Naive thymus-derived CD4-positive, alpha-beta T cell (primary cell): ENCODE measurements at regions of chr1 and their contacts with region 1.

Region 1: GRCh38 chr1:52365746-52366516 is at the start of gene CC2D1B:
- DNase-seq: peak; percentile 97 to 100 (median 99)
- ATAC-seq: peak; percentile 90
- H3K4me3 ChIP-seq: peak within 1 kb of the TSS; percentile 67
- H3K4me3 Mint-ChIP-seq: peak within 1 kb of the TSS; percentile 85 to 98 (median 94)
- H3K27ac ChIP-seq: peak within 1 kb of the TSS; percentile 95
- H3K27ac Mint-ChIP-seq: peak within 1 kb of the TSS; percentile 89 to 97 (median 94)
- H3K4me1 ChIP-seq: peaks cover 15 to 20% of the 10 kb centered on the region in 2 donors
- H3K4me1 Mint-ChIP-seq: peaks cover 26 to 65% (median 51%) of the 10 kb centered on the region in 7 donors
- H3K27me3 ChIP-seq: no peaks in the 10 kb centered on the region
- H3K27me3 Mint-ChIP-seq: no peaks in the 10 kb centered on the region
- total RNA-seq, gene CC2D1B: 44.5 to 91.2 (median 58.3) TPM

Region 2: GRCh38 chr1:51519048-51519864 is 846.7 kb before region 1 on chr1 and contains the start of gene EPS15:
- CTCF ChIA-PET with region 1: no interaction called
- POLR2A ChIA-PET with region 1: no interaction called
- intact Hi-C with region 1: loop called in 1 of 2 experiments (anchors 2 kb)
- DNase-seq: peak; percentile 62 to 90 (median 77)
- ATAC-seq: peak; percentile 86
- H3K4me3 ChIP-seq: peak within 1 kb of the TSS; percentile 87
- H3K4me3 Mint-ChIP-seq: peak within 1 kb of the TSS; percentile 89 to 97 (median 94)
- H3K27ac ChIP-seq: peak within 1 kb of the TSS; percentile 66
- H3K27ac Mint-ChIP-seq: peak within 1 kb of the TSS; percentile 86 to 95 (median 90)
- H3K4me1 ChIP-seq: peaks cover 31 to 34% of the 10 kb centered on the region in 2 donors
- H3K4me1 Mint-ChIP-seq: peaks cover 46 to 58% (median 55%) of the 10 kb centered on the region in 7 donors
- H3K27me3 ChIP-seq: no peaks in the 10 kb centered on the region
- H3K27me3 Mint-ChIP-seq: no peaks in the 10 kb centered on the region
- total RNA-seq, gene EPS15: 44.8 to 79.9 (median 53.5) TPM

Region 3: DNA sequence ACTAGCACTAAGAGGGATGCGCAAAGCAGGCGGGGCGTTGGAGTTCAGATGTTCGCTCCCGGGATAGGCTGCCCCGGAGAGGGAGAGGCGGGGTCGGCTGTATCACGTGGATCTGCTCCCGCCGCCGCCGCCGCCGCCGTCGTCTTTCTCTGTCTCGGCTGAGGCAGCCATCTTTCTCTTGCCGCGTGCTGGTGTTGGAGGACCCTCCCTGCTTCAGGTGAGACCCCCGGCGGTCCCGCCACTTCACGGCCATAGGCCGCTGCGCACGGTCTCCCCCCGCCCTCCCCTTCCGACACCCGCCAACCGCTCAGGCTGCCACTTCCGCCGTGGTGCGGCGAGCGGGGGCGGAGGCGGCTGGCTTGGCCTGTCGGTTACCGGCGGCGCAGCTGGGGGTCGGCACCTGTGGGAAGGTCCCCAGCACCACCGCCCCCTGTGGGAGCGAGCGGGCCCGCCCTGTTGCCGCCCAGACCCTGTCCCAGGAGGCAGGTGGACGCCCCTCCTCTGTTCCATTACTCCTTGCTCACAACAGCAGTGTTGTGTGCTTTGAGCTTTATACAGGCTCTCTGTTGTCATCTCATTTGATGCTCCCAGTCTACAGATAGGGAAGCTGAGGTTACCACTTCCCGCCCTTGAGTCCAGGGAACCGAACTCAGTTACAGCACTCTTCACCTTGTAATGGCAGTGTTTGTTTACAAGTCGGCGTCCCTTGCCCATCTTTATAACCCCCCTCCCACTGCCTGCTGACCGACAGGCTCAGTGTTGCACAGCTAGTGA is 309.6 kb before region 1 on chr1 and contains the start of gene BTF3L4:
- CTCF ChIA-PET with region 1: no interaction called
- POLR2A ChIA-PET with region 1: no interaction called
- intact Hi-C with region 1: loop called in 1 of 2 experiments (anchors 2 kb)
- DNase-seq: peak; percentile 74 to 94 (median 90)
- ATAC-seq: peak; percentile 97
- H3K4me3 ChIP-seq: peak within 1 kb of the TSS; percentile 92
- H3K4me3 Mint-ChIP-seq: peak within 1 kb of the TSS; percentile 93 to 100 (median 98)
- H3K27ac ChIP-seq: peak within 1 kb of the TSS; percentile 87
- H3K27ac Mint-ChIP-seq: peak within 1 kb of the TSS; percentile 91 to 99 (median 96)
- H3K4me1 ChIP-seq: peaks cover 19 to 24% of the 10 kb centered on the region in 2 donors
- H3K4me1 Mint-ChIP-seq: peaks cover 39 to 79% (median 65%) of the 10 kb centered on the region in 7 donors
- H3K27me3 ChIP-seq: no peaks in the 10 kb centered on the region
- H3K27me3 Mint-ChIP-seq: no peaks in the 10 kb centered on the region
- total RNA-seq, gene BTF3L4: 30.4 to 41.2 (median 35.8) TPM

Region 4: DNA sequence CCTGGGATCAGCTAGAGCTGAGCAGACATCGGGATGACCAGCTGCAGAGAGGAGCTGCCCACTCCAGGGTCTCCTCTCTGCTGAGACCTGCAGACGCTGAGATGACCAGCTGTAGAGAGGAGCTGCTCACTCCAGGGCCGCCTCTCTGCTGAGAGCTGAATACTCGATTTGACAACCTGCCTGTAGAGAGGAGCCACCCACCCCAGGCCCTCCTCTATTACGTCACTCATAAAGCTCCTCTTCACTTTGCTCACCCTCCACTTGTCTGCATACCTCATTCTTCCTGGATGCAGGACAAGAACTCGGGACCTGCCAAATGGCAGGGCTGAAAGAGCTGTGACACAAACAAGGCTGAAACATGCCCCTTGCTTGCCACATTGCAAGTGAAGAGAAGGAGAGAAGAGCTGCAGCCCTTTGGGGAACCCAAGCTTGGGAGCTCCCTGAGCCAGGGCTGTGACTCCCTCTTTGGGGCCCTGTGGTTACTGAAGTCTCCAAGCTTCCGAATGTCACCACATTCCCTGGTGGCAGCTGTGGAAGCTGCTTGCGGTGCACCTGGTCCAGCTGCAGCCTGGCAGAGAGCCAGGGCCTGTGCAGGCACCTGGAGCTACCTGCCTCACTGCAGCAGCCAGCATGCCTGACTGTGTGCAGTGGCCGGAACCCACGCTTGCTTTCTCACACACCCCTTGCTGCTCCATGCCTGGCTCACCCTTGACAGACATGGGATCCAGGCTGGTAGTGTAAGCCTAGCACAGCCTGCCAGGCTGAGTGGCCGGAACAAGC is 59.5 kb before region 1 on chr1:
- CTCF ChIA-PET with region 1: no interaction called
- POLR2A ChIA-PET with region 1: no interaction called
- intact Hi-C with region 1: no loop called
- DNase-seq: no peak
- ATAC-seq: no peak
- H3K4me3 ChIP-seq: no peak overlapping the region
- H3K4me3 Mint-ChIP-seq: no peak overlapping the region
- H3K27ac ChIP-seq: no peak overlapping the region
- H3K27ac Mint-ChIP-seq: no peak overlapping the region
- H3K4me1 ChIP-seq: no peaks in the 10 kb centered on the region
- H3K4me1 Mint-ChIP-seq: no peaks in the 10 kb centered on the region
- H3K27me3 ChIP-seq: no peaks in the 10 kb centered on the region
- H3K27me3 Mint-ChIP-seq: no peaks in the 10 kb centered on the region

Region 5: DNA sequence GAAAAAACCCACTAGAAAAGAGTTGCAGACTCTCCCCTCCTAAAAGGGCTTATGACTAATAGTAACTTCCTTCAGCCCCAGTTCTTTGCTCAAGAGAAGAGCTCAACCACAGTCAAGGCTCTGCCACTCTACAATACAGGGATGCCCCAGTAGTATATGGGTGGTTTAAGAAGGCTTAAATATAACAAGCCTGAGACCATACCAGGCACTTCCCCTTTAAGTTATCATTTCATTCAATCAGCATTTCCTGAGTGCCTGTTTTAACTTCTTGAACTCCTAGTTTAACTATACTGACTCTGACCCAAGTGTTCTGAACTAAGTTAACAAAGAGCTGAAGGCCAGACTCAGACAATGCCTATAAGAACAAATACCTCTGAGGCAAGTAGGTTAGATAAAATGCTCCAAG is 58.3 kb after region 1 on chr1:
- CTCF ChIA-PET with region 1: no interaction called
- POLR2A ChIA-PET with region 1: interaction called, 5 read pairs
- intact Hi-C with region 1: loop called in 1 of 2 experiments (anchors 1 kb)
- DNase-seq: peak in 7 of 9 donors; percentile 38 to 71 (median 57)
- ATAC-seq: peak; percentile 93
- H3K4me3 ChIP-seq: peak overlapping the region; percentile 14
- H3K4me3 Mint-ChIP-seq: peak overlapping the region; percentile 49 to 81 (median 74)
- H3K27ac ChIP-seq: peak overlapping the region; percentile 63
- H3K27ac Mint-ChIP-seq: peak overlapping the region; percentile 85 to 96 (median 91)
- H3K4me1 ChIP-seq: peaks cover 35 to 45% of the 10 kb centered on the region in 2 donors
- H3K4me1 Mint-ChIP-seq: peaks cover 33 to 72% (median 51%) of the 10 kb centered on the region in 7 donors
- H3K27me3 ChIP-seq: no peaks in the 10 kb centered on the region
- H3K27me3 Mint-ChIP-seq: no peaks in the 10 kb centered on the region

Region 6: DNA sequence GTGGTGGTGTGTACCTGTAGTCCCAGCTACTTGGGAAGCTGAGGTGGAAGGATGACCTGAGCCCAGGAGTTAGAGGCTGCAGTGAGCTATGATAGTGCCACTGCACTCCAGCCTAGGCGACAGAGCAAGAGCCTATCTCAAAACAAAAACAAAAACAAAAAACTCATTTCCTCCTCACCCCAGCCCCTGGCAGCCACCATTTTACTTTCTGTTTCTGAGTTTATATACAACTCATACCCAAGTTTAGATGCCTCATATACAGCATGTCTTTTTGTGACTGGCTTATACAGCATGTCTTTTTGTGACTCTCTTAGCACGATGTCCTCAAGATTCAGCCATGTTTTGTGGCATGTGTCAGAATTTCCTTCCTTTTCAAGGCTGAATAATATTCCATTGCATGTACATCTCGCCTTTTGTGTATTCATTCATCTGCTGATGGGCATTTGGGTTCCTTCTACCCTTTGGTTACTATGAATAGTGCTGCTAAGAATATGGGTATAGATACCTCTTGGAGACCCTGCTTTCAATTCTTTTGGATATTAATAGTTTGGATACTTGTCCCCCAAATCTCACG is 317.5 kb after region 1 on chr1:
- CTCF ChIA-PET with region 1: no interaction called
- POLR2A ChIA-PET with region 1: no interaction called
- intact Hi-C with region 1: loop called (anchors 1 kb)
- DNase-seq: no peak
- ATAC-seq: no peak
- H3K4me3 ChIP-seq: no peak overlapping the region
- H3K4me3 Mint-ChIP-seq: no peak overlapping the region
- H3K27ac ChIP-seq: no peak overlapping the region
- H3K27ac Mint-ChIP-seq: peak overlapping the region in 6 of 9 donors; percentile 8 to 68 (median 26)
- H3K4me1 ChIP-seq: peaks cover 4 to 6% of the 10 kb centered on the region in 2 donors
- H3K4me1 Mint-ChIP-seq: peaks cover 6 to 28% (median 13%) of the 10 kb centered on the region in 7 donors
- H3K27me3 ChIP-seq: no peaks in the 10 kb centered on the region
- H3K27me3 Mint-ChIP-seq: no peaks in the 10 kb centered on the region

Region 7: DNA sequence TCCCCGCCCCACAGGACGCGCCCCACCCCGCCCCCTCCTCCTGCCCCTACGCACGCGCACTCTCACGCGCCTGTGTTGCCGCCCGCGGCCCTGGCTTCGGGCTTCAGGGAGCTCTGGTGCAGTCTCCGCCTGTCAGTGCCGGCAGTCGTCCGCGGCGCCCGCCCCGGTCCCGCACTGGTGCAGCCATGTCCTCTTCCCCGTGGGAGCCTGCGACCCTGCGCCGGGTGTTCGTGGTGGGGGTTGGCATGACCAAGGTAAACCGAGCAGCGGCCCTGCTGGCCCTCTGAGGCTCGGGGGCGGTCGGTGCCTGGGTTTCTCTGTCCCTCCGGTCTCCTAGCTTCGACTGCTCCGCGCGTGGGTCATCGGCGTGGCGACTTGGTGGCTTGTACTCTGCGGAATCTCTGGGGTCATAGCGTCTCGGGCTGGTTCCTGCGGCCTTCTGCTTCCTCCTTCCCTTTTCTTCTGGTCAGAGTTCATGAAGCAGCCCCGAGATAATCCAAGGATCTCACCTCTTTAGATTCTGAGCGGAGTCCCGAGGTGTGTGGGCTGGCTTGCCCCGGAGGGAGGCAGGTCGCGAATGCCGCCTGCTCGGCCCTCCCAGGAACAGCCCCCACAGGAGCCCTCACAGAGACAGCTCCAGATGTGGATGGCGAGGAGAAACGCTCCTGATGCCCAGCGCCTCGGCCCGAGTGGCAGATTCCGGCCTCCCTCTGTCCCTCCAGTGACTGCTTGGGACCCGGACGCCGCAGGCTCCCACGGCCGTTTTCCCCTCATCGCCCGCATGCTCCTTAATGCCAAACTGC is 561.5 kb after region 1 on chr1 and contains the start of gene SCP2:
- CTCF ChIA-PET with region 1: no interaction called
- POLR2A ChIA-PET with region 1: no interaction called
- intact Hi-C with region 1: loop called (anchors 10 kb)
- DNase-seq: peak; percentile 64 to 83 (median 75)
- ATAC-seq: peak; percentile 96
- H3K4me3 ChIP-seq: peak within 1 kb of the TSS; percentile 87
- H3K4me3 Mint-ChIP-seq: peak within 1 kb of the TSS; percentile 82 to 96 (median 88)
- H3K27ac ChIP-seq: peak within 1 kb of the TSS; percentile 77
- H3K27ac Mint-ChIP-seq: peak within 1 kb of the TSS; percentile 33 to 93 (median 75)
- H3K4me1 ChIP-seq: peaks cover 4 to 7% of the 10 kb centered on the region in 2 donors
- H3K4me1 Mint-ChIP-seq: peaks cover 16 to 41% (median 27%) of the 10 kb centered on the region in 7 donors
- H3K27me3 ChIP-seq: no peaks in the 10 kb centered on the region
- H3K27me3 Mint-ChIP-seq: peaks cover 0 to 6% (median 0%) of the 10 kb centered on the region in 5 donors
- total RNA-seq, gene SCP2: 39.4 to 88.7 (median 48.3) TPM

Region 8: DNA sequence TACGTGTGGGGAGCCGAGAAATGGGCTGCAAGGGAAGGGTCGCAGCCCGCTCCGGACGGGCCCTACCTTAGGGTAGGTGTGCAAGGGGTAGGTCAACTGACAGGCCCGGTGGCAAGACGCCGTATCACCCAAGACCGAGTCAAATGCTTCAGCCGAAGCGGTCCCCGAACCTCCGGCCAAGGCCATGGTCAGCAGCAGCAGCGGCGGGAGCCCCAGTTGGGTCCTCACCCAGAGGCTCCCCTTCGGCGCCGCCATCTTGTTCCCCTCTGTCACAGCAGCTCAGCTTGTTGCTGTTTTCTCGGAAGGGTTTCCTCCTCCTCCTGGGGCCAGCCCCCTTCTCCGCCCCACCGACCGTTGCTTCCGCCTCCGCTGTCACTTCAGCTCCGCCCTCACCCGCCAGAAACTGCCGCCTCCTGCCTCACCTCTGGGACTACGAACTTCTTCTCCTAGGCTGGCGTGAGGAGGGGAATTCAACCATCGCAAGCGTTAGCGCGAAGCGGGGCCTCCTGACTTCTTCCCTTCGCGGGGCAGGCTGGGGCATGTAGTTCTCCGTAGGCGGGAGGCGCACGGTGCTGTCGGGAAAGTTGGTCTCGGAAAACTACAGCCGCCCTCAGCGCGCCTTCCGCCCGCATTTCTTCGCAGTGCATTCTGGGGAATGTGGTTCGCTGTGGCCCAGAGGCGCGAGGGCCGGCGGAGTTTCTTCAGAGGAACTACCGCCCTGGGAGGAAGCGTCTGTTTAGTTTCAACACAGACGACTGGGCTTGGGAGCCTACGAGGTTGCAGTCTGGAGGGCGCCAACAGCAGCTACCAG is 1687.2 kb after region 1 on chr1 and contains the starts of genes TCEANC2 and TMEM59:
- CTCF ChIA-PET with region 1: no interaction called
- POLR2A ChIA-PET with region 1: no interaction called
- intact Hi-C with region 1: loop called in 1 of 2 experiments (anchors 5 kb)
- DNase-seq: peak; percentile 84 to 99 (median 98)
- ATAC-seq: peak; percentile 94
- H3K4me3 ChIP-seq: peak within 1 kb of the TSS; percentile 94
- H3K4me3 Mint-ChIP-seq: no peak within 1 kb of the TSS
- H3K27ac ChIP-seq: peak within 1 kb of the TSS; percentile 92
- H3K27ac Mint-ChIP-seq: no peak within 1 kb of the TSS
- H3K4me1 ChIP-seq: peaks cover 23 to 34% of the 10 kb centered on the region in 2 donors
- H3K4me1 Mint-ChIP-seq: peaks cover 27 to 62% (median 52%) of the 10 kb centered on the region in 7 donors
- H3K27me3 ChIP-seq: no peaks in the 10 kb centered on the region
- H3K27me3 Mint-ChIP-seq: no peaks in the 10 kb centered on the region
- total RNA-seq, gene TCEANC2: 6.3 to 15.1 (median 12.2) TPM
- total RNA-seq, gene TMEM59: 127 to 197 (median 183) TPM